Endothelial cell of umbilical vein (primary cell): ENCODE measurements at regions of chr16 and their contacts with region 1.

Region 1: DNA sequence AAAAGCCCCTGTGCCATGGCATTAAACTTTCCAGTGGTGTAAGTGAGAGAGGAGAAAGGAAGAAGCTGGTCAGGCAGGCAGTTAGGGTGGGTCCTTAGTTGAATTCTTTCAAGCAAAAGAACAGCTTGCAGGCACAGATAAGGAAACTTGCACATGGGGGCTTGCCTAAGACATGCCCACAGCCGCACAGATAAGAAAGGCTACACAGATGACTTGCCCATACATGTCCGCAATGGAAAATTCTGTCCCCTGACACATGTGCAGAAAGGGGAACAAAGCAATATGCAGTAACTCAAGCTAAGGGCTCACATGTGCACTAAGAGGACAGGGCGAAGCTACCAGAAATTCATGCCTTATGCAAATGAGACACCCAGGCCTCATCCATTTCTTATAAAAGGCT is 69.9 kb downstream of the GSG1L start:
- DNase-seq: no peak
- H3K4me3 ChIP-seq: no peak overlapping the region
- H3K27ac ChIP-seq: no peak overlapping the region
- H3K4me1 ChIP-seq: no peaks in the 10 kb centered on the region
- H3K27me3 ChIP-seq: peaks cover 0 to 2% of the 10 kb centered on the region in 2 experiments
- CTCF ChIP-seq: no peak
- POLR2A ChIP-seq: no peak

Region 2: GRCh38 chr16:27721531-27722181 is 271.9 kb before region 1 on chr16:
- CTCF ChIA-PET with region 1: no interaction called
- POLR2A ChIA-PET with region 1: no interaction called
- dilution Hi-C with region 1: no loop called
- intact Hi-C with region 1: no loop called
- DNase-seq: no peak
- H3K4me3 ChIP-seq: no peak overlapping the region
- H3K27ac ChIP-seq: no peak overlapping the region
- H3K4me1 ChIP-seq: no peaks in the 10 kb centered on the region
- H3K27me3 ChIP-seq: no peaks in the 10 kb centered on the region
- CTCF ChIP-seq: no peak
- POLR2A ChIP-seq: no peak

Region 3: DNA sequence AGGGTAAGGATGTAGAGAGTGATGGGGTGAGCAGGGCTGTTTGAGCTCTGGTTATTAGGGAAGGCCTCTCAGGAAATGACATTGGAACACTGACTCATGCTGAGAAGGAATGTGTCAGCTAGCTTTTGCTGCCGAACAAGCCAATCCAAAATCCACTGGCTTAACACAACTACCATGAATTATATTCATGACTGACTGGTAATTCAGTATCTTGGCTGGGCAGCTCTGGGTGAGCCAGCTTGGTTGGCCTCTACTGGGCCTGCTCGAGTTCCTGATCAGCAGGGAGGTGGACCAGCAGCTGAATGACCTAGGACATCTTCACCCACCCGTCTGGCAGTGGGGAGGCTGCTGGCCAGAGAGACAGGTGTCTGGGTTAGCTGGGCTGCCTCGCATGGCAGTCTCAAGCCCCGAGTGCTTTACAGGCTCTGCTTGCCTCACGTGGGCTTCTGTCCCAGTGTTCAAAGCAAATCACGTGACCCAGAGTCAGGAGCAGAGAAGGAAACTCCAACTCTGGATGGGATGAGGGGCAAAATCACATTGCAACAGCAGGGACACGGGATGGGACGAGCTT is 234.2 kb before region 1 on chr16:
- CTCF ChIA-PET with region 1: no interaction called
- POLR2A ChIA-PET with region 1: no interaction called
- dilution Hi-C with region 1: no loop called
- intact Hi-C with region 1: no loop called
- DNase-seq: peak; percentile 58
- H3K4me3 ChIP-seq: no peak overlapping the region
- H3K27ac ChIP-seq: peak overlapping the region; percentile 62
- H3K4me1 ChIP-seq: peaks cover 11% of the 10 kb centered on the region
- H3K27me3 ChIP-seq: no peaks in the 10 kb centered on the region
- CTCF ChIP-seq: no peak
- POLR2A ChIP-seq: no peak

Region 4: GRCh38 chr16:27917953-27918352 is 75.6 kb before region 1 on chr16:
- CTCF ChIA-PET with region 1: no interaction called
- POLR2A ChIA-PET with region 1: no interaction called
- dilution Hi-C with region 1: no loop called
- intact Hi-C with region 1: loop called (anchors 2 kb)
- DNase-seq: no peak
- H3K4me3 ChIP-seq: no peak overlapping the region
- H3K27ac ChIP-seq: no peak overlapping the region
- H3K4me1 ChIP-seq: no peaks in the 10 kb centered on the region
- H3K27me3 ChIP-seq: no peaks in the 10 kb centered on the region
- CTCF ChIP-seq: no peak
- POLR2A ChIP-seq: no peak